ENCODE measurements at regions of chr12 and their contacts with region 1.

Region 1: DNA sequence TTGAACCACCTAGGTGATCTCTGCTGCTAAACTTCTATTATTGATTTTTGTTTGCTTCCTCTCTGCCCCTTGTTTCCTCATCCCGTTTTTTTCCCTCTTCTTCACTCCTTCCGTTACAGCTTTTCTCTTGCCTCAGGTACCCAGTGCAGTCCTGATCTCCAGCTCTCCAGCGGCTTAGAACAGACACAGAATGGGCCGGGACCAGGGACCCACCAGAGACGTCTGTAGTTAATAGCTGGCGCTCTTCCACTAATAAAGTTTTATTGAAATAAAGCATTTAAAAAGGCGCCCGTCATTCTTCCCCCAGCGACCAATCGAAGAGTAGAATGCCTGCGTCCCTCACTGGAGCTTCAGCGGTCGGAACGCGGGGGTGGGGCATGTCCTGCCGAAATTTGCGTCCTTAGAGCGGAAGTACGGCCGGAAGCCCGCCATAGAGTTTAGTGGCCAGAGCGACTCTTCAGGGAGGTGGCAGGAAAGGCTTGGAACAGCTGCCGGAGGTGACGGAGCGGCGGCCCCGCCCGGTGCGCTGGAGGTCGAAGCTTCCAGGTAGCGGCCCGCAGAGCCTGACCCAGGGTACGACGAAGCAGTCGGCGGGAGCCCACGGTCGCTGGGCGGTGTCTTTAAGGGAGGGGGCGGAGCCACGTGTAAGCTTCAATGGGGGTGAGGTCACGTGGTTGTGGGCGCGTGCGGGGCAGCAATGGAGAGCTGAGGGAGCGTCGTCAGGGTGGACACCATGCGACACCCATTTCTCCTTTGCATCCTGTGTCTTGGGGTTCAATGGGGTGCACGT is at the start of gene COPS7A:
- DNase-seq: peak; percentile 98
- ATAC-seq: peak; percentile 96
- H3K4me3 Mint-ChIP-seq: peak within 1 kb of the TSS; percentile 80
- H3K27ac Mint-ChIP-seq: peak within 1 kb of the TSS; percentile 97
- H3K4me1 Mint-ChIP-seq: peaks cover 18% of the 10 kb centered on the region
- H3K27me3 Mint-ChIP-seq: no peaks in the 10 kb centered on the region
- total RNA-seq, gene COPS7A: 38.3 to 41.6 TPM

Region 2: DNA sequence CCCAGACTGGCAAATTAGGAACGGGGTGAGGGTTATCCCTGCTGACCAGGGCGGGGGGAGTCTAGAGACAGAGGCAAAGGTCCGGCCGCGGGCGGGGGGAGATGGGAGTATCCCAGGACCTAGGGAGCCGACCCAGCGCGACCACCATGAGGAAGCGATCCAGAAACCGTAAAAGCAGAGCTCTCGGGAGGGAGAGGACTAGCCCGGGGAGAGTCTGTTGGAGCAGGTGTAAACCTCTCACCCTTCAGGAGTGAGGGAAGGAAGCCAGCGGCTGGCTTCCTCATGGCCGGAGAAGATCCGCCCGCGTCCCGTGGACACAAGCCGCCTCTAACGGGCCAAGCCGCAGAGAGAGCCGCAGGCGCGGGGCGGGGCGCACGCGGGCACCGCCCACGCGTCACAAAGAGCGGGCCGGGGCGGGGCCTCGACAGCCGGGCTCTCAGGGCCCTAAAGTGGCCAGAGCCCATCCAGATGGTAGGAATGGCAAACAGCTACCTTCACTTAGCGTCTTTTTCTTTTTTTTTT is 76.7 kb before region 1 on chr12 and contains the start of gene ACRBP:
- CTCF ChIA-PET with region 1: no interaction called
- POLR2A ChIA-PET with region 1: no interaction called
- intact Hi-C with region 1: no loop called
- DNase-seq: peak; percentile 64
- ATAC-seq: peak; percentile 85
- H3K4me3 Mint-ChIP-seq: peak within 1 kb of the TSS; percentile 65
- H3K27ac Mint-ChIP-seq: peak within 1 kb of the TSS; percentile 44
- H3K4me1 Mint-ChIP-seq: peaks cover 10% of the 10 kb centered on the region
- H3K27me3 Mint-ChIP-seq: no peaks in the 10 kb centered on the region
- total RNA-seq, gene ACRBP: 1.7 to 3.3 TPM

Region 3: DNA sequence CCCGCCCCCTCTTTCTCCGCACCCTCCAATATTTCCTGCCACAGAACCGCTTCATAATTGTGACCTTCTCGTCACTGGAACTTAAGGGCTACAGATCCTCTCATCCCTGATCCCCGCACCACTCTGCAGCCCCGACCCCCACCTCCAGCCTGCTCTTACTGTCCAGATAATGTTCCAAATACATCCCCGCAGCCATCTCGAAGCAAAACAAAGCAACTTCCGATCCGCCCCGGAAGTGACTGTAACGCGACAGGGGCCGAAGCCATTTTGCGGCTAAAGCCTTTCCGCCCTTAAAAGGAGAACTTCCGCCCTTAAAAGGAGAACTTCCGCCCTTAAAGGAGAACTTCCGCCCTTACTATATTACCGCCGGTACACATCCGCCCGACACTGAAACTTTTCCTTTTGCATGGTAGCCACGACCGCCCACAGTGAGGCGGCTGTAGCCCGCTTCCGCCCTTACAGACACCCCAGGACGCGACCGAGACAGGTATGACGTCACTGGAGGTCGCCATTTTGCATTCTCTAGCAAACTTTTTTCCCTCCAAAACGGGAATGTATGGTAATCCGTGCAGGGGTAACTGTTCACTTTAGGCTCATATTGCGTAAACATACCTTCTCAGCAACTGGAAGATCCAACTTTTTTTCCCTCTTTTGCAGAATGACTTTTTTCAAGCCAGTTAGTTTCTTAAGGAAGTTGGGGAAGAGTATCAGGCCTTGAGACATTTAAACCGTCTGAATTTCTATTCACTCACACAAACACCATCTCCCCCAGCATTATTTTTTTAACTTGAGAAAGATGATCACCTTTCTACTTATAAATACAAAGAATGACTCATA is 60.7 kb before region 1 on chr12 and contains the start of gene ING4:
- CTCF ChIA-PET with region 1: interaction called, 3 read pairs
- POLR2A ChIA-PET with region 1: interaction called, 5 read pairs
- intact Hi-C with region 1: loop called (anchors 1 to 2 kb)
- DNase-seq: peak; percentile 98
- ATAC-seq: peak; percentile 98
- H3K4me3 Mint-ChIP-seq: peak within 1 kb of the TSS; percentile 84
- H3K27ac Mint-ChIP-seq: peak within 1 kb of the TSS; percentile 91
- H3K4me1 Mint-ChIP-seq: peaks cover 24% of the 10 kb centered on the region
- H3K27me3 Mint-ChIP-seq: no peaks in the 10 kb centered on the region
- total RNA-seq, gene ING4: 14.9 to 17.6 TPM

Region 4: DNA sequence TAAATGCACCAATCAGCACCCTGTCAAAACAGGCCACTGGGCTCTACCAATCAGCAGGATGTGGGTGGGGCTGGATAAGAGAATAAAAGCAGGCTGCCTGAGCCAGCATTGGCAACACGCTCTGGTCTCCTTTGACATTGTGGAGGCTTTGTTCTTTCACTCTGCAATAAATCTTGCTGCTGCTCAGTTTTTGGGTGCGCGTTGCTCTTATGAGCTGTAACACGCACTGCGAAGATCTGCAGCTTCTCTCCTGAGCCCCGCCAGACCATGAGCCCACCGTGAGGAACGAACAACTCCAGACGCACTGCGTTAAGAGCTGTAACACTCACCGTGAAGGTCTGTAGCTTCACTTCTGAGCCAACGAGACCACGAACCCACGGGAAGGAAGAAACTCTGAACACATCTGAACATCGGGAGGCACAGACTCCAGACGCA is 14.8 kb before region 1 on chr12:
- CTCF ChIA-PET with region 1: interaction called, 4 read pairs
- POLR2A ChIA-PET with region 1: interaction called, 10 read pairs
- intact Hi-C with region 1: no loop called
- DNase-seq: peak; percentile 62
- ATAC-seq: peak; percentile 82
- H3K4me3 Mint-ChIP-seq: peak overlapping the region; percentile 20
- H3K27ac Mint-ChIP-seq: peak overlapping the region; percentile 81
- H3K4me1 Mint-ChIP-seq: peaks cover 10% of the 10 kb centered on the region
- H3K27me3 Mint-ChIP-seq: peaks cover 12% of the 10 kb centered on the region

Region 5: GRCh38 chr12:6764011-6764828 is 40.4 kb after region 1 on chr12:
- CTCF ChIA-PET with region 1: no interaction called
- POLR2A ChIA-PET with region 1: no interaction called
- intact Hi-C with region 1: loop called in 1 of 2 experiments (anchors 1 kb)
- DNase-seq: peak; percentile 68
- ATAC-seq: peak; percentile 80
- H3K4me3 Mint-ChIP-seq: peak overlapping the region; percentile 28
- H3K27ac Mint-ChIP-seq: peak overlapping the region; percentile 44
- H3K4me1 Mint-ChIP-seq: peaks cover 28% of the 10 kb centered on the region
- H3K27me3 Mint-ChIP-seq: peaks cover 33% of the 10 kb centered on the region

Region 6: GRCh38 chr12:6904280-6905278 is 180.8 kb after region 1 on chr12 and contains the start of gene LRRC23:
- CTCF ChIA-PET with region 1: no interaction called
- POLR2A ChIA-PET with region 1: no interaction called
- intact Hi-C with region 1: loop called in 1 of 2 experiments (anchors 1 kb)
- DNase-seq: peak; percentile 99
- ATAC-seq: peak; percentile 97
- H3K4me3 Mint-ChIP-seq: no peak within 1 kb of the TSS
- H3K27ac Mint-ChIP-seq: no peak within 1 kb of the TSS
- H3K4me1 Mint-ChIP-seq: peaks cover 14% of the 10 kb centered on the region
- H3K27me3 Mint-ChIP-seq: no peaks in the 10 kb centered on the region
- total RNA-seq, gene LRRC23: 6.4 to 7.0 TPM

Region 7: DNA sequence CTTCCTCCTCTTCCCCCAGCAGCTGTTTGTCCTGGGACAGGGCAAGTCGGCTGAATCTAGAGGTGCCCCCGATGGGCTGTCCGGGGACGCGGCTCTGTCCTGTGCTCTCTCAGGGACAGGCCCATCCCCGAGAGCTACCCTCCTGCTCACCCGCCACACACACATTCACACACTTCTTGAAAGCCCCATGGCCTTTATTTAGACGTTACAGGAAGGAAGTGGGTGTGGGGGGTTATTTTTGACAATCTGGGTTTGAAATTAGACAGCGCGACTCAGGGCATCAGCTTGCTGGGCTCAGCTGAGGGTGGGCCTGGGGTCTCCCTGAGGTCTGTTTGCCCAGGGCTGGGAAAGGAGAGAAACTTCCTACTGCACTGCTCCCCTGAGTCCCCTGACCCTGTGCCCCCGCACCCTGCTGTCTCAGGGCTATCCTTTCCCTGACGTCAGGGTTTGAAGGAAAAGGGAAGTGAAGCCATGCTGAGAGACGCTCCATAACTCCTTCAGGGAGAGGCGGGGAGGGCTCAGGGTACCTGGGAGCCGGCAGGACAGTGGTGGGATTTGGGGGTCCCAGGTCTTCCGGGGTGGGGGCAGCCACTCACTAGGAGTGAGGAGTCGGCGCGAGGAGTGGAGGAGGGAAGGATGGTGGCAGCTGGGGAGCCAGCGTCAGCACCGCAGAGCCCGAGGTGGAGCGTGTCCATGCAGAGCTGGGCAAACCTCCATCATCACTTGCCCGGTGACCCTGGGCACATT is 235.4 kb after region 1 on chr12:
- CTCF ChIA-PET with region 1: no interaction called
- POLR2A ChIA-PET with region 1: no interaction called
- intact Hi-C with region 1: no loop called
- DNase-seq: peak; percentile 82
- ATAC-seq: peak; percentile 51
- H3K4me3 Mint-ChIP-seq: peak overlapping the region; percentile 77
- H3K27ac Mint-ChIP-seq: peak overlapping the region; percentile 99
- H3K4me1 Mint-ChIP-seq: peaks cover 88% of the 10 kb centered on the region
- H3K27me3 Mint-ChIP-seq: no peaks in the 10 kb centered on the region